CD4-positive, alpha-beta T cell (primary cell): ENCODE measurements at regions of chr12 and their contacts with region 1.

Region 1: GRCh38 chr12:104485651-104486362 is 29.1 kb downstream of the CHST11 start:
- DNase-seq: peak in 13 of 14 experiments; percentile 36 to 78 (median 51)
- ATAC-seq: peak; percentile 95
- H3K4me3 ChIP-seq: no peak overlapping the region
- H3K4me3 Mint-ChIP-seq: peak overlapping the region; percentile 69
- H3K27ac ChIP-seq: peak overlapping the region; percentile 3 to 33
- H3K27ac Mint-ChIP-seq: peak overlapping the region; percentile 76
- H3K4me1 ChIP-seq: peaks cover 73% of the 10 kb centered on the region
- H3K4me1 Mint-ChIP-seq: peaks cover 92% of the 10 kb centered on the region
- H3K27me3 ChIP-seq: no peaks in the 10 kb centered on the region
- H3K27me3 Mint-ChIP-seq: no peaks in the 10 kb centered on the region
- CTCF ChIP-seq: no peak

Region 2: GRCh38 chr12:104462931-104463339 is 22.9 kb before region 1 on chr12:
- CTCF ChIA-PET with region 1: interaction called, 4 read pairs
- POLR2A ChIA-PET with region 1: interaction called, 35 read pairs
- intact Hi-C with region 1: loop called (anchors 2 kb)
- DNase-seq: peak in 9 of 14 experiments; percentile 29 to 80 (median 60)
- ATAC-seq: peak; percentile 52
- H3K4me3 ChIP-seq: peak overlapping the region; percentile 24
- H3K4me3 Mint-ChIP-seq: peak overlapping the region; percentile 85
- H3K27ac ChIP-seq: peak overlapping the region; percentile 59 to 74
- H3K27ac Mint-ChIP-seq: peak overlapping the region; percentile 86
- H3K4me1 ChIP-seq: peaks cover 70% of the 10 kb centered on the region
- H3K4me1 Mint-ChIP-seq: peaks cover 85% of the 10 kb centered on the region
- H3K27me3 ChIP-seq: no peaks in the 10 kb centered on the region
- H3K27me3 Mint-ChIP-seq: no peaks in the 10 kb centered on the region
- CTCF ChIP-seq: no peak

Region 3: DNA sequence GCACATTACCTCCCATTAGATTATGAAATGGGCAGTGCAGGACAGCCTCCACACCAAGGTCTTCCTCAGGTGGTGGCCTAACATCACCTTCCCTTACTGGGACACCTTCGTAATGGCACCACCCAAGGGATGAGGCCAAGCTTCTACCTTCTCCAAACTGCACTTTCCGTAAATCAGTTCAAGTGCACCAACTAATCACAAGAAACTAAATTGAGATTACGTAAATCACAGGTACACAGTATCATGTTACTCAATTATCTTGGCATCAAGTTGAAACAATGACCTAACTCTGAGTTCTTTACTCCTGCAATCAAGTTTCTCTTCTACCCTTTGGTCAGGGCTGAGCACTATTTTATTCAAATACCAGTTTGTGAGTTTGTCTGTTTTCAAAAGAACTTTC is 458.4 kb after region 1 on chr12:
- CTCF ChIA-PET with region 1: no interaction called
- POLR2A ChIA-PET with region 1: no interaction called
- intact Hi-C with region 1: no loop called
- DNase-seq: no peak
- ATAC-seq: no peak
- H3K4me3 ChIP-seq: no peak overlapping the region
- H3K4me3 Mint-ChIP-seq: no peak overlapping the region
- H3K27ac ChIP-seq: no peak overlapping the region
- H3K27ac Mint-ChIP-seq: no peak overlapping the region
- H3K4me1 ChIP-seq: no peaks in the 10 kb centered on the region
- H3K4me1 Mint-ChIP-seq: no peaks in the 10 kb centered on the region
- H3K27me3 ChIP-seq: no peaks in the 10 kb centered on the region
- H3K27me3 Mint-ChIP-seq: no peaks in the 10 kb centered on the region
- CTCF ChIP-seq: no peak

Region 4: GRCh38 chr12:104966677-104967076 is 480.9 kb after region 1 on chr12:
- CTCF ChIA-PET with region 1: no interaction called
- POLR2A ChIA-PET with region 1: no interaction called
- intact Hi-C with region 1: no loop called
- DNase-seq: no peak
- ATAC-seq: no peak
- H3K4me3 ChIP-seq: no peak overlapping the region
- H3K4me3 Mint-ChIP-seq: no peak overlapping the region
- H3K27ac ChIP-seq: no peak overlapping the region
- H3K27ac Mint-ChIP-seq: no peak overlapping the region
- H3K4me1 ChIP-seq: no peaks in the 10 kb centered on the region
- H3K4me1 Mint-ChIP-seq: no peaks in the 10 kb centered on the region
- H3K27me3 ChIP-seq: no peaks in the 10 kb centered on the region
- H3K27me3 Mint-ChIP-seq: peaks cover 29% of the 10 kb centered on the region
- CTCF ChIP-seq: no peak